ENCODE measurements at regions of chr12 and their contacts with region 1.

Region 1: GRCh38 chr12:26434299-26435068 is 239.1 kb downstream of the SSPN start:
- DNase-seq: no peak
- H3K4me3 Mint-ChIP-seq: no peak overlapping the region
- H3K27ac Mint-ChIP-seq: no peak overlapping the region
- H3K4me1 Mint-ChIP-seq: no peaks in the 10 kb centered on the region
- H3K27me3 Mint-ChIP-seq: no peaks in the 10 kb centered on the region

Region 2: GRCh38 chr12:26523708-26524150 is 89.2 kb after region 1 on chr12:
- CTCF ChIA-PET with region 1: interaction called, 3 read pairs
- POLR2A ChIA-PET with region 1: no interaction called
- intact Hi-C with region 1: loop called (anchors 10 kb)
- DNase-seq: no peak
- H3K4me3 Mint-ChIP-seq: no peak overlapping the region
- H3K27ac Mint-ChIP-seq: no peak overlapping the region
- H3K4me1 Mint-ChIP-seq: peaks cover 7% of the 10 kb centered on the region
- H3K27me3 Mint-ChIP-seq: no peaks in the 10 kb centered on the region

Region 3: DNA sequence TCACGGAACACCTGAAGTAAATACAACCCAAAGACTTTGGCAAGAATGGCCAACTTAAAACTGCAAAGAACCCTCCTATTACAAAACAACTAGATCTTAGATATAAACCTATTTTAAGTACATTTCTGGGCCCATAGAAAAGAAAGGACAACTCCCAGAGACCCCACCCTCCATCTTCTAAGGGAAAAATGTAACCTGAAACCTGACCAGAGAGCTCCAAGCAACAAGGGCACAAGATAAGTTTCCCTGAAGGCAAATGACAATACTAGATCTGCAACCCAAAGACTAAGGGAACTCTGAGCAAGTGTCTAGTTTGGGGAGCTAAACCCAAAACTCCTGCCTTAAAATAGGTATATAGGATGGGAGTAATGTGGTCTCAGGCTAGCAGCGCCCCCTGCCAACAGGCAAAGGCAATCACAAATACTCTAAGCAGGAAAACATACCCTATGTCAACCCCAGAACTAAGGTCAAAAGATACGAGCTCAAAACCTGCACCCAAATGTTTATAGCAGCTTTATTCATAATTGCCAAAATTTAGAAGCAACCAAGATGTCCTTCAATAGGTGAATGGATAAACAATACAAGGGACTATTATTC is 179.6 kb after region 1 on chr12:
- CTCF ChIA-PET with region 1: no interaction called
- POLR2A ChIA-PET with region 1: no interaction called
- intact Hi-C with region 1: loop called (anchors 10 kb)
- DNase-seq: peak; percentile 40
- H3K4me3 Mint-ChIP-seq: no peak overlapping the region
- H3K27ac Mint-ChIP-seq: no peak overlapping the region
- H3K4me1 Mint-ChIP-seq: no peaks in the 10 kb centered on the region
- H3K27me3 Mint-ChIP-seq: no peaks in the 10 kb centered on the region

Region 4: DNA sequence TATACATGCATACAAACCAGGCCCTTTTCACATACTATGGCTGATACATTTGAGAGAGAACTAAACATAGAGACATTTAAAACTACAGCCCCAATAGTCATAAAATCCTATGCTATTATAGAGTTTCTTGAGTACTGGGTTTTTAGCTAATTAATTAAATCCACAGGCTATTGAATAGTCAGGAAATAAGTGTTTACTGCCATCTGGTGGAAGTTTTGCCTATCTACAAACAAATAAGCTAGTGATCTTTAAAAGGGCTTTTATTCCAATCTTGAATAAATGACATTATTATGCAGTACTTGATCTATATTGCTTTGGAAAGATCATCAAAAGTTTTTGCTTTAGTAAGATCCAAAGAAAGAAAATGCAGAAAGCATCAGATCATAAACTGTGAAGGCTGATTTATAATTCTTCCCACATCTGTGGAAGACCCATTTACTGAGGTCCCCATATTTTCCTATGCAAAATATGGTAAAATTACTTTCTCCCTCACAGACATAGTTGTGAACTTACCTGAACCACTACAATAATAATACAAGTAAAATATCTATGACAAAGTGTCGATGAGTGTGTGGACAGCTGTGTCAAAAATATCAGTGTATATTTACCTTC is 267.2 kb after region 1 on chr12:
- CTCF ChIA-PET with region 1: interaction called, 3 read pairs
- POLR2A ChIA-PET with region 1: no interaction called
- intact Hi-C with region 1: loop called (anchors 10 kb)
- DNase-seq: no peak
- H3K4me3 Mint-ChIP-seq: no peak overlapping the region
- H3K27ac Mint-ChIP-seq: no peak overlapping the region
- H3K4me1 Mint-ChIP-seq: no peaks in the 10 kb centered on the region
- H3K27me3 Mint-ChIP-seq: no peaks in the 10 kb centered on the region

Measured in activated CD4-positive, alpha-beta memory T cell treated with anti-CD3 and anti-CD28 coated beads for 36 hours (primary cell).